Right cardiac atrium (tissue), 5 donors: ENCODE measurements at regions of chr2 and their contacts with region 1.

Region 1: GRCh38 chr2:131413148-131413747 is 49.3 kb upstream of the RAB6D start:
- DNase-seq: no peak
- ATAC-seq: peak in 1 of 2 donors; percentile 45
- H3K4me3 ChIP-seq: no peak overlapping the region
- H3K27ac ChIP-seq: no peak overlapping the region
- H3K4me1 ChIP-seq: no peaks in the 10 kb centered on the region
- H3K27me3 ChIP-seq: peaks cover 2% of the 10 kb centered on the region

Region 2: DNA sequence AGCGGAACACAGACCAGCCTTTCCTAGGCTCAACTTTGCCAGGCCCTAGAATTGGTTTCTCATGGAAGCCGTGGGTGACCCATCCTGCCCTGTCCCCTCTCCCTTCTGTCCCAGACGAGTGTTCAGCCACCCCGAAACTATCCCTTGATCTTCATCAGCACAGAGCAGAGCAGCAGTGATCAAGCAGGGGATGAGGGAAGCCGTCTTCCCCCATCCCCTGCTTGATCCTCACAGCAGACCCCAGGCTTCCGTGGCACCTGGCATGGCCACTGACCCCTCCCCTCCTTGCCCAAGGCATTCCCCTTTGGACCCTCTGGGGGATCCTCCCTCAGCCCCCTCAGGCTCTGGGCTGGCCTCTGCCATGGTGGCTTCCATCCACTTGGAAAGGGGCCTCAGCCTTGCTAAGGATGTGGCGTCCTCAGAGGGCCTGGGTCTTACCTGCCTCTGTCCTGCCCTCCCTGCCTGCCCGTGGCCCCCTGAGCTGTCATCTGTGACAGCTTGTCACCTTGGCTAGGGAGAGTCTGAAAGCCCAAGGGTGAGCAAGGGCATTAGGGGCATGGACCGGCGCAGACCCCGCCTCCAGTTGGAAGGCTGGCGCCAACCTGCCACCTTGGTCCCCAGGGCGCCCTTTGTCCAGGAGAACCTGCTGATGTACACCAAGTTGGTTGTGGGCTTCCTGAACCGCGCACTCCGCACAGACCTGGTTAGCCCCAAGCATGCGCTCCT is 104.0 kb after region 1 on chr2:
- intact Hi-C with region 1: loop called in 1 of 4 experiments (anchors 5 kb)
- DNase-seq: peak in 1 of 3 donors; percentile 41
- ATAC-seq: no peak
- H3K4me3 ChIP-seq: no peak overlapping the region
- H3K27ac ChIP-seq: no peak overlapping the region
- H3K4me1 ChIP-seq: no peaks in the 10 kb centered on the region
- H3K27me3 ChIP-seq: no peaks in the 10 kb centered on the region